ENCODE measurements at regions of chr21 and their contacts with region 1.

Region 1: GRCh38 chr21:36535618-36536241 is 55.8 kb upstream of the CLDN14 start:
- DNase-seq: peak; percentile 67
- CTCF ChIP-seq: no peak

Region 2: GRCh38 chr21:36511484-36512220 is 24.1 kb before region 1 on chr21:
- CTCF ChIA-PET with region 1: interaction called, 10 read pairs
- POLR2A ChIA-PET with region 1: interaction called, 10 read pairs
- DNase-seq: no peak
- CTCF ChIP-seq: no peak